Activated CD8-positive, alpha-beta T cell treated with anti-CD3 and anti-CD28 coated beads for 36 hours (primary cell): ENCODE measurements at regions of chr14 and their contacts with region 1.

Region 1: GRCh38 chr14:91649930-91650329 is 82.0 kb downstream of the CATSPERB start:
- DNase-seq: peak; percentile 55
- ATAC-seq: peak; percentile 68
- H3K4me3 Mint-ChIP-seq: no peak overlapping the region
- H3K27ac Mint-ChIP-seq: no peak overlapping the region
- H3K4me1 Mint-ChIP-seq: no peaks in the 10 kb centered on the region
- H3K27me3 Mint-ChIP-seq: no peaks in the 10 kb centered on the region
- CTCF ChIP-seq: peak; percentile 80

Region 2: DNA sequence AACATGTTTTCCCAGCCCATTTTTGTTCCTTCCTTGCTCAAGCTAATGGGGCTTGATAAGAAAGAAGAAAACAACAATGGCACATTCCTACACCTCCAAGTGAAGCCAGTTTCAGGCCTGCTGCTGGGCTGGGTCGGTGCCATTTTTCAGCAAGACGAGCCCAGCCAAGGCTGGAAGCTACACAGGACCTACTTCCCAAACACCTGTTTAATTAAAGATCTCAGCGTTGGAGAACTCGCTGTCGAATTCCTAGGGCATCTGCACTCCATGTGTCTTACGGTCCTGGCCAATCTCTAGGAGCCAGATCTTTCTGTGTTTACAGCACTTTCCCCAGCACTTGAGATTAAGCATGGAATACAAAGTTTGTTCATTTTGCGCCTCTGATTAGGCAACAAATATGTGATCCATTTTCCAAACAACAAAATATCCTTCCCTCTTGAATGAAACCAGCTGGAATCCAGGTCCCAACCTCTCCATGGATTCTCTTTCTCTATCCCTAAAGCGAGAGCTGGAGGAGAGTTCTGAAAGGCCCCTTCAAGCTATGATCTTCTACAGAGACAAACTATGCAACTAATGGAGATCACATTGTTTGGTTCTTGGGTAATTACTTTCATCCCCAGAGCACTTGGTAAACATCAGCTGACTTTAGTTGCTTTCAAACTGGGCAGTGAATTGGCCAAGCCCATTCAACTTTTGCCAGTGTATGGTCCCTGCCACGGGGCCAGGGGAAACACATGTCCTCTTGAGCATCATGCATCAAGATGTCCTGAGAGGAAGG is 251.7 kb after region 1 on chr14:
- CTCF ChIA-PET with region 1: interaction called, 7 read pairs
- POLR2A ChIA-PET with region 1: no interaction called
- intact Hi-C with region 1: loop called (anchors 5 kb)
- DNase-seq: no peak
- ATAC-seq: no peak
- H3K4me3 Mint-ChIP-seq: no peak overlapping the region
- H3K27ac Mint-ChIP-seq: no peak overlapping the region
- H3K4me1 Mint-ChIP-seq: peaks cover 2% of the 10 kb centered on the region
- H3K27me3 Mint-ChIP-seq: no peaks in the 10 kb centered on the region
- CTCF ChIP-seq: no peak